Activated T-helper 2 cell treated with anti-CD3 and anti-CD28 coated beads, Interferon-gamma antibody, Interleukin-2, Interleukin-4, amounts not matched to agents 10 μg/mL and 5 μg/mL and 100 μg/mL, durations not matched to agents 14 hours and 24 hours and 36 hours (primary cell): ENCODE measurements at regions of chr1 and their contacts with region 1.

Region 1: GRCh38 chr1:42681741-42682483 is at the start of gene YBX1:
- DNase-seq: peak; percentile 94
- H3K4me3 Mint-ChIP-seq: peak within 1 kb of the TSS; percentile 97
- H3K27ac Mint-ChIP-seq: peak within 1 kb of the TSS; percentile 96
- H3K4me1 Mint-ChIP-seq: peaks cover 45% of the 10 kb centered on the region
- H3K27me3 Mint-ChIP-seq: no peaks in the 10 kb centered on the region
- total RNA-seq, gene YBX1: 815 and 840 TPM in 2 replicates

Region 2: GRCh38 chr1:40979233-40980067 is 1702.5 kb before region 1 on chr1 and contains the start of gene CTPS1:
- intact Hi-C with region 1: loop called (anchors 10 kb)
- DNase-seq: peak; percentile 91
- H3K4me3 Mint-ChIP-seq: peak within 1 kb of the TSS; percentile 98
- H3K27ac Mint-ChIP-seq: peak within 1 kb of the TSS; percentile 97
- H3K4me1 Mint-ChIP-seq: peaks cover 56% of the 10 kb centered on the region
- H3K27me3 Mint-ChIP-seq: no peaks in the 10 kb centered on the region
- total RNA-seq, gene CTPS1: 124 and 127 TPM in 2 replicates

Region 3: GRCh38 chr1:42335050-42335808 is 346.7 kb before region 1 on chr1 and contains the start of gene FOXJ3:
- intact Hi-C with region 1: loop called (anchors 10 kb)
- DNase-seq: peak; percentile 87
- H3K4me3 Mint-ChIP-seq: peak within 1 kb of the TSS; percentile 90
- H3K27ac Mint-ChIP-seq: peak within 1 kb of the TSS; percentile 84
- H3K4me1 Mint-ChIP-seq: peaks cover 37% of the 10 kb centered on the region
- H3K27me3 Mint-ChIP-seq: no peaks in the 10 kb centered on the region
- total RNA-seq, gene FOXJ3: 43.1 and 46.4 TPM in 2 replicates

Region 4: GRCh38 chr1:42456010-42456758 is 225.7 kb before region 1 on chr1 and contains the starts of genes PPCS and ZMYND12:
- intact Hi-C with region 1: loop called (anchors 1 kb)
- DNase-seq: peak; percentile 87
- H3K4me3 Mint-ChIP-seq: peak within 1 kb of the TSS; percentile 93
- H3K27ac Mint-ChIP-seq: peak within 1 kb of the TSS; percentile 98
- H3K4me1 Mint-ChIP-seq: peaks cover 24% of the 10 kb centered on the region
- H3K27me3 Mint-ChIP-seq: peaks cover 3% of the 10 kb centered on the region
- total RNA-seq, gene PPCS: 41.4 and 41.8 TPM in 2 replicates
- total RNA-seq, gene ZMYND12: 0.11 and 0.28 TPM in 2 replicates

Region 5: GRCh38 chr1:42657971-42658879 is 23.7 kb before region 1 on chr1 and contains the start of gene PPIH:
- intact Hi-C with region 1: loop called (anchors 1 kb)
- DNase-seq: peak; percentile 93
- H3K4me3 Mint-ChIP-seq: peak within 1 kb of the TSS; percentile 99
- H3K27ac Mint-ChIP-seq: peak within 1 kb of the TSS; percentile 97
- H3K4me1 Mint-ChIP-seq: peaks cover 37% of the 10 kb centered on the region
- H3K27me3 Mint-ChIP-seq: peaks cover 4% of the 10 kb centered on the region
- total RNA-seq, gene PPIH: 77.5 and 78.7 TPM in 2 replicates

Region 6: GRCh38 chr1:42924082-42924850 is 242.4 kb after region 1 on chr1:
- intact Hi-C with region 1: loop called (anchors 5 kb)
- DNase-seq: peak; percentile 89
- H3K4me3 Mint-ChIP-seq: peak overlapping the region; percentile 80
- H3K27ac Mint-ChIP-seq: peak overlapping the region; percentile 93
- H3K4me1 Mint-ChIP-seq: peaks cover 35% of the 10 kb centered on the region
- H3K27me3 Mint-ChIP-seq: no peaks in the 10 kb centered on the region

Region 7: GRCh38 chr1:43367904-43368645 is 686.2 kb after region 1 on chr1 and contains the start of gene ELOVL1:
- intact Hi-C with region 1: loop called (anchors 10 kb)
- DNase-seq: peak; percentile 86
- H3K4me3 Mint-ChIP-seq: peak within 1 kb of the TSS; percentile 97
- H3K27ac Mint-ChIP-seq: peak within 1 kb of the TSS; percentile 88
- H3K4me1 Mint-ChIP-seq: peaks cover 35% of the 10 kb centered on the region
- H3K27me3 Mint-ChIP-seq: no peaks in the 10 kb centered on the region
- total RNA-seq, gene ELOVL1: 82.7 and 83.6 TPM in 2 replicates